Activated CD4-positive, alpha-beta memory T cell treated with anti-CD3 and anti-CD28 coated beads, Interleukin-2, amount 10 ng/mL, durations not matched to agents 7 days and 5 days (primary cell): ENCODE measurements at regions of chr1 and their contacts with region 1.

Region 1: DNA sequence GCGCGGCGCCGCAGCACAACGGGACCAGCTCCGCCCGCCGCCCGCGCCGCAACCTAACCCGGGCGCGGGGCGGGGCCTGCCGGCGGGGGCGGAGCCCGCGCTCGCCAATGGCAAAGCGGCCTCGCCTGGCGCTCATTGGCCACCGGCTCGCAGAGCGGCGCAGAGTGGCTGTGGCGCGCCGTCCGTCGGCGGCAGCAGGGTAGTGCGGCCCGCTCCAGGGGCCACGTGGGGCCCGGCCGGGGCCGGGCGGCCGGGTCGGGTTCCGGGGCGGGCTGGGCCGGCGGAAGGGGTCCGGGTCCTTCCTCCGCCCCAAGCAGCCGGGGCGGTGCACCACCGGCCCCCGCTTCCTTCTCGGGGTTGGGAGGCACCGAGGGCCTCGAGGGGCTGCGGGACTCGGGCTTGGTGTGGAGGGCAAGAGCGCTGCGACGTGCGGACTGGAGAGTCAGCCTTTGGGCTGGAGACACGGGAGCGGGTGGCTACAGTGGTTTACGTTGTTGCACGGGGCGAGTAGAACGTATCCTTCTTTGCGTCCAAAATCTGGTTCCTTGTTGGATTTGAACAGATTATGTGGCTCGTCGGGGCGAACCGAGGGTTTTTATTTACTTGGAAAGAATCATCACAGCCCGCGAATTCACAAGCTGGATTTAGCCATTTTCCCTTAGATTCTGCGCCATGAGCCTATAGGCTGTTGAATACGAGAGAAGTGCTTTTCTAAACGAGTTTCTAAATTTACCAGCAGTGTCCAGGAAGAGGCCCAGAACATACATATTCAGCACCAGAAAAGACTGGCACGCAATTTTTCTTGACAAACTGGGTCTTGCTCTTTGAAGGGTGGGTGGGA is at the start of gene SRM:
- DNase-seq: peak; percentile 92
- H3K4me3 Mint-ChIP-seq: peak within 1 kb of the TSS; percentile 97
- H3K27ac Mint-ChIP-seq: peak within 1 kb of the TSS; percentile 85
- H3K4me1 Mint-ChIP-seq: peaks cover 51% of the 10 kb centered on the region
- H3K27me3 Mint-ChIP-seq: no peaks in the 10 kb centered on the region
- total RNA-seq, gene SRM: 69.3 to 72.1 TPM

Region 2: DNA sequence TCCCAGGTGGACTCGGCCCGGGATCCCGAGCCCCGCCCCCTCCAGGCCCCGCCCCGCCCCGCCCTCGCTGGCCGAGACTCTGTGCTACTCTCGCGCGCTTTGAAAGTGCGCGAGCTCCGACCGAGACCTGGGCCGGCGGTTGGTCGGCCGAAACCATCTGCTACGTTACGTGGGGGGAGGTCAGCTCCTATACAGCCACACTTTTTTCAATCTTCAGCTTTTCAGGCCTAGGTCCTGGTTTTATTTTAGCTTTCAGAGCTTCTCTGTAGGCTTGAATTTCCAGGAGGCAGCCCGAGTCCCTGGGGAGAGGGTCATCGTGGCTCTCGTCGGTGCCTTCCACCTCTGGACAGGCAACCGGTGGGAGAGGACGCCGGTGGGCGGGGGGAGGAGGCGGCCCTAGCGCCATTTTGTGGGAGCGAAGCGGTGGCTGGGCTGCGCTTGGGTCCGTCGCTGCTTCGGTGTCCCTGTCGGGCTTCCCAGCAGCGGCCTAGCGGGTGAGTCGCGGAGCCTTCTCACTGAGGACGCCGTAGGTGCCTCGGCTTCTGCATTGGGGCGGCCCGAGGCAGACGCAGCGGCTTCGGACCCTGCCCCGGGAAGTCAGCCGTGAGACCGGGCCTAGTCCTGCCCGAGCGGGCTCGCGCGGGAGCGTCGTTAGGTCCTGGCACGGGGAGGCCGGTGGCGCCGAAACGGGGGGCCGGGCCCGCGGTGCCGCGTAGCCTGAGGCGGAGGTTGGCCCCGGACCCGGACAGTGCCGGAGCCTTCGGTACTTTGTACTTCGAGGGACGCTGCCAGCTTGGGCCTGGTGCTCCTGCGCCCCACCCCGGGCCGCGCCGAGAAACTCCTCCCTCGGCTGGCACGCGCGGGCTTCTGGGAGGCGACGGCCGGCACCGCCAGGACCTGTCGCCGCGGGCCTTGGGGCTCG is 47.7 kb before region 1 on chr1 and contains the start of gene TARDBP:
- CTCF ChIA-PET with region 1: no interaction called
- POLR2A ChIA-PET with region 1: interaction called, 40 read pairs
- DNase-seq: peak; percentile 91
- H3K4me3 Mint-ChIP-seq: peak within 1 kb of the TSS; percentile 92
- H3K27ac Mint-ChIP-seq: peak within 1 kb of the TSS; percentile 85
- H3K4me1 Mint-ChIP-seq: peaks cover 30% of the 10 kb centered on the region
- H3K27me3 Mint-ChIP-seq: no peaks in the 10 kb centered on the region
- total RNA-seq, gene TARDBP: 159 to 174 TPM

Region 3: DNA sequence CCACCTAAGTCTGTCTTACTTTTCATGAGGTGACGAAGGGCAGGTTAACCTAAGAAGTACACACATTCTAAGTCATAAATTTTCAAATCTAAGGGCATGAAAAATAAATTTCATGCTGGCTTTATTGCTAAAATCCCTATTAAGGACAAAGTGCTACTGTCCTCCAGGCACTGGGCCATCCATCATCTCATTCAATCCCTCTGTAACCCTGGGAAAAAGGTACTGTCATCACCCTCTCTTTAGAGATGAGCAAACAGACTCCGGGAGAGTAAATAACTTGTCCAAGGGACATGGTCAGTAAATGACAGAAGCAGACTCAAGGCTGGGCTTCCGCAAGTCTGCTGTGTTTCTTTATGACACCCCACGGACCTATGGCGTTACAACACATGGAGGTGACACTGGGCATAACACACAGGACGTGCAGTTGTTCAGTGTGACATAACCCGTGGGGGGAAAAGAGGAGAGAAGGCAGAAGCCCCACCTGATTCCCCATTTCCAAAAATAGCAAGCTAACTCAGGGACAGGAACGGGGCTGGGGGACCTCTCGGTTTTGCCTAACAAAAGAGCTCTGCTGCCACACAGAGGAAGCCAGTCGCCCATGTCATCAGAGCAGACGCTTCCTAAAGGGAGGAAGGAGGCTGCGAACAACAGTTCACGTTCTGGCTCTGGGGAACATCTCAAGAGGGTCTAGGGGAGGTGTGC is 12.2 kb after region 1 on chr1:
- CTCF ChIA-PET with region 1: interaction called, 7 read pairs
- POLR2A ChIA-PET with region 1: interaction called, 24 read pairs
- DNase-seq: no peak
- H3K4me3 Mint-ChIP-seq: no peak overlapping the region
- H3K27ac Mint-ChIP-seq: no peak overlapping the region
- H3K4me1 Mint-ChIP-seq: peaks cover 7% of the 10 kb centered on the region
- H3K27me3 Mint-ChIP-seq: no peaks in the 10 kb centered on the region

Region 4: GRCh38 chr1:11099310-11100149 is 39.3 kb after region 1 on chr1 and contains the start of gene EXOSC10:
- CTCF ChIA-PET with region 1: interaction called, 10 read pairs
- POLR2A ChIA-PET with region 1: interaction called, 38 read pairs
- DNase-seq: peak; percentile 96
- H3K4me3 Mint-ChIP-seq: peak within 1 kb of the TSS; percentile 92
- H3K27ac Mint-ChIP-seq: peak within 1 kb of the TSS; percentile 91
- H3K4me1 Mint-ChIP-seq: peaks cover 24% of the 10 kb centered on the region
- H3K27me3 Mint-ChIP-seq: no peaks in the 10 kb centered on the region
- total RNA-seq, gene EXOSC10: 65.8 to 67.6 TPM